ENCODE measurements at regions of chr2 and their contacts with region 1.

Region 1: GRCh38 chr2:234951664-234952269 is at the start of gene SH3BP4:
- DNase-seq: peak; percentile 54 to 91
- H3K4me3 ChIP-seq: peak within 1 kb of the TSS; percentile 97
- H3K27ac ChIP-seq: peak within 1 kb of the TSS; percentile 53
- H3K4me1 ChIP-seq: peaks cover 38% of the 10 kb centered on the region
- H3K27me3 ChIP-seq: no peaks in the 10 kb centered on the region
- CTCF ChIP-seq: no peak
- total RNA-seq, gene SH3BP4: 131 and 135 TPM in 2 replicates

Region 2: GRCh38 chr2:234550511-234551107 is 401.2 kb before region 1 on chr2:
- CTCF ChIA-PET with region 1: interaction called, 6 read pairs
- POLR2A ChIA-PET with region 1: no interaction called
- intact Hi-C with region 1: loop called (anchors 1 kb)
- DNase-seq: peak; percentile 74 to 85
- H3K4me3 ChIP-seq: no peak overlapping the region
- H3K27ac ChIP-seq: no peak overlapping the region
- H3K4me1 ChIP-seq: peaks cover 11% of the 10 kb centered on the region
- H3K27me3 ChIP-seq: no peaks in the 10 kb centered on the region
- CTCF ChIP-seq: peak; percentile 99

Region 3: GRCh38 chr2:234650911-234651310 is 300.9 kb before region 1 on chr2:
- CTCF ChIA-PET with region 1: no interaction called
- POLR2A ChIA-PET with region 1: no interaction called
- intact Hi-C with region 1: no loop called
- DNase-seq: no peak
- H3K4me3 ChIP-seq: no peak overlapping the region
- H3K27ac ChIP-seq: no peak overlapping the region
- H3K4me1 ChIP-seq: no peaks in the 10 kb centered on the region
- H3K27me3 ChIP-seq: no peaks in the 10 kb centered on the region
- CTCF ChIP-seq: no peak

Region 4: DNA sequence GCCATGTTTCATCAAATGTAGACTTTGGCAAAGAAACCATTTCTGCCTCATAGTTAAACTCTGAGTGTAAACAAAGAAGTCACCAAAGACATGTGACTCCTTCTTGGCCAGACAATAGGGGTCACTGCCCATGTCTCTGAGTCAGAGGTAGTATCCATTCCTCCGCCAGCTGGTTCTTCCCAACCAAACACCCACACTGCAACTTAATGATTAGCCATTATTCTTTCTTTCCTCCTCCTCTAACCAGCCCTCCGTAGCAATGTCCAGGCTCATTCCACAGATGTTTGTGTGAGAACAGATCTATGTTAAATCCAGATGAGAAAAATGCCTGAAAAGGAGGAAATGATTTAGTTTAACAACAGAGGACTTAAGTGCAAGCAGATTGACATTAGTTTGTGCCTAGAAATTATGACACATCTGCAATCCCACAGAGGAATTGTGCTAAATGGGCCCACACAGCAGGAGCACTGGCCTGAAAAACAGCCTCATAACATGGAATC is 127.8 kb before region 1 on chr2:
- CTCF ChIA-PET with region 1: no interaction called
- POLR2A ChIA-PET with region 1: interaction called, 6 read pairs
- intact Hi-C with region 1: loop called (anchors 5 kb)
- DNase-seq: peak; percentile 77 to 92
- H3K4me3 ChIP-seq: no peak overlapping the region
- H3K27ac ChIP-seq: peak overlapping the region; percentile 46; the same call in 1 of the 2 replicates
- H3K4me1 ChIP-seq: peaks cover 54% of the 10 kb centered on the region
- H3K27me3 ChIP-seq: no peaks in the 10 kb centered on the region
- CTCF ChIP-seq: no peak

Region 5: GRCh38 chr2:234881413-234882241 is 70.1 kb before region 1 on chr2:
- CTCF ChIA-PET with region 1: interaction called, 3 read pairs
- POLR2A ChIA-PET with region 1: interaction called, 14 read pairs
- intact Hi-C with region 1: loop called (anchors 2 kb)
- DNase-seq: peak; percentile 88 to 92
- H3K4me3 ChIP-seq: peak overlapping the region; percentile 41; the same call in 1 of the 2 replicates
- H3K27ac ChIP-seq: peak overlapping the region; percentile 82
- H3K4me1 ChIP-seq: peaks cover 47% of the 10 kb centered on the region
- H3K27me3 ChIP-seq: no peaks in the 10 kb centered on the region
- CTCF ChIP-seq: peak; percentile 97

Region 6: GRCh38 chr2:234988491-234988890 is 36.7 kb after region 1 on chr2:
- CTCF ChIA-PET with region 1: no interaction called
- POLR2A ChIA-PET with region 1: no interaction called
- intact Hi-C with region 1: no loop called
- DNase-seq: no peak
- H3K4me3 ChIP-seq: no peak overlapping the region
- H3K27ac ChIP-seq: 0 out of 2 replicates have a peak overlapping the region, but pooled peaks have one; percentile 14
- H3K4me1 ChIP-seq: peaks cover 36% of the 10 kb centered on the region
- H3K27me3 ChIP-seq: no peaks in the 10 kb centered on the region
- CTCF ChIP-seq: no peak

Region 7: DNA sequence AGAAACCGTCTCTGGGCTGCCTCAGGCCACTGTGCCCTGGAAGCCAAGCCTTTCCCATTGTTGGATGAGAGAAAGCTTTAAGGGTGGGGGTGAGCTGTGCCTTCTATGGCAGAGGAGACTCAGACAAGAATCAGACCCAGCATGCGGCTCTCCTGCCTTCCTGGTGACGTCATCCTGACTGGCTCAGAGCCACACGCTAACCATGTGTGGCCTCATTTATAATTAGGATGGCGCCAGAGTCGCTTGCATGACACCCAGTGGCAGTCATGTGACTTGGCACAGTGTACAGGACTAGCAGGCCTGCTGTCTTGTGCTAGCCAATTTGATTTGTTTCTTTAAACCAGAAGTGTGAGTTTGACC is 99.2 kb after region 1 on chr2:
- CTCF ChIA-PET with region 1: interaction called, 4 read pairs
- POLR2A ChIA-PET with region 1: interaction called, 21 read pairs
- intact Hi-C with region 1: loop called (anchors 1 kb)
- DNase-seq: peak; percentile 89 to 97
- H3K4me3 ChIP-seq: no peak overlapping the region
- H3K27ac ChIP-seq: peak overlapping the region; percentile 74
- H3K4me1 ChIP-seq: peaks cover 57% of the 10 kb centered on the region
- H3K27me3 ChIP-seq: no peaks in the 10 kb centered on the region
- CTCF ChIP-seq: no peak; the same call in 1 of the 2 replicates

Region 8: GRCh38 chr2:235116885-235117492 is 165.2 kb after region 1 on chr2:
- CTCF ChIA-PET with region 1: interaction called, 10 read pairs
- POLR2A ChIA-PET with region 1: interaction called, 9 read pairs
- intact Hi-C with region 1: no loop called
- DNase-seq: peak in 1 of 2 experiments; percentile 55
- H3K4me3 ChIP-seq: no peak overlapping the region
- H3K27ac ChIP-seq: no peak overlapping the region
- H3K4me1 ChIP-seq: no peaks in the 10 kb centered on the region; the same call in 1 of the 2 replicates
- H3K27me3 ChIP-seq: no peaks in the 10 kb centered on the region
- CTCF ChIP-seq: peak; percentile 92

Region 9: DNA sequence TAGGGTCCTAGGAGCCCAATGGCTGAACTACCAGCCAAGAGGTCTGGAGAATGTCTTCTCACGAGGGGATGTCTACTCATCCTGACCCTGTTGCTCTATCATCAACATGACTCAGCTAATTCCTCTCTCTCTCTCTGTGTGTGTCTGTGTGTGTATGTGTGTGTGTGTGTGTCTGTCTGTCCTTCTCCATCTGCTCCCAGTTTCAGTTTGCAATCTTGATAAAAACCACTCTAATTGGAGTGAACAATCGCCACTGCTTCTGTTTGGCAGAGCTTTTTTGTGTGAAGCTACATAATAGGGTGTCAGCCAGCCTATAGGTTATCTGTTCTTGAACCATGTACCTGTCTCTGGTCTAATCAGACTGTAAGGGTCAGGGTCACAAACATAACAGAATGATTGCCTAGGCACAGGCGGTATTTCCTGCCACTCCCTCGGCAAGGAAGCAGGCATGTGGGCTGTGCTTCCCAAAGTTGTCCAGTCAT is 219.8 kb after region 1 on chr2:
- CTCF ChIA-PET with region 1: no interaction called
- POLR2A ChIA-PET with region 1: no interaction called
- intact Hi-C with region 1: no loop called
- DNase-seq: peak; percentile 27 to 52
- H3K4me3 ChIP-seq: no peak overlapping the region
- H3K27ac ChIP-seq: peak overlapping the region; percentile 94
- H3K4me1 ChIP-seq: peaks cover 41% of the 10 kb centered on the region
- H3K27me3 ChIP-seq: no peaks in the 10 kb centered on the region
- CTCF ChIP-seq: no peak

Region 10: DNA sequence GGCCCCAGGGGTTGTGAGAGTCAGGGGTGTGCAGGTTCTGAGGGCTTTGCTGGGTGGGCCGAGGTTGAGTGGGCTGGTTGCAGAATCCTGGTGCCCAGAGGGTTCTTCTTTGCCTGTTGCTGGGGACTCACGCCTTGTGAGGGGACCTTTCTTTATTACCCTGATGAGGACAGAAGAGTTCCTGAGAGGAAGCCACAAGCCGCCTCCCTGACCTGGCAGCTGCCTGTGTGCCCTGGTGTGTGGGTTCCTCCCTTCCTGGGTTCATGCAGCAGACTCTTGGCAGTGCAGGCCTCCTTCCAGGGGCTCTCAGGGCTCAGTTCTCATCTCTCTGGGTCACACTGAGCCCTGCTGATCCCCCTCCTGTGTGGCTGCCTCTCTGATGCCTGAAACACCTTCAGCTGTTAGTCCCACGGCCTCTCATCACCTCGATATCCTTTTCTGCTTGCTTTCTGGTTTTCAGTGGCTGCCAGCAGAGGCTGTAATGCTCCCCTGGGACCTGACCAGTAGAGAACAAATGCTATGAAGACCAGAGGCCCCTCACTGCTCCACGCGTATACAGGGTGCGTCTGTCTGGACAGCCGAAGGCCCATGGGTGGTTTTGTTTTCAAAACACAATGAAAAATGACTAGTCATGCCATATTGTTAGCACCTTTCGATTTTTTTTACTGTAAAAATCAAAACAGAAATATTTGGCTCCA is 733.4 kb after region 1 on chr2:
- CTCF ChIA-PET with region 1: no interaction called
- POLR2A ChIA-PET with region 1: interaction called, 15 read pairs
- intact Hi-C with region 1: no loop called
- DNase-seq: no peak
- H3K4me3 ChIP-seq: no peak overlapping the region
- H3K27ac ChIP-seq: no peak overlapping the region
- H3K4me1 ChIP-seq: 0 out of 2 replicates have a peak, but pooled peaks cover 7% of the 10 kb centered on the region
- H3K27me3 ChIP-seq: no peaks in the 10 kb centered on the region
- CTCF ChIP-seq: no peak